A549 (cell line): ENCODE measurements at regions of chr2 and their contacts with region 1.

Region 1: DNA sequence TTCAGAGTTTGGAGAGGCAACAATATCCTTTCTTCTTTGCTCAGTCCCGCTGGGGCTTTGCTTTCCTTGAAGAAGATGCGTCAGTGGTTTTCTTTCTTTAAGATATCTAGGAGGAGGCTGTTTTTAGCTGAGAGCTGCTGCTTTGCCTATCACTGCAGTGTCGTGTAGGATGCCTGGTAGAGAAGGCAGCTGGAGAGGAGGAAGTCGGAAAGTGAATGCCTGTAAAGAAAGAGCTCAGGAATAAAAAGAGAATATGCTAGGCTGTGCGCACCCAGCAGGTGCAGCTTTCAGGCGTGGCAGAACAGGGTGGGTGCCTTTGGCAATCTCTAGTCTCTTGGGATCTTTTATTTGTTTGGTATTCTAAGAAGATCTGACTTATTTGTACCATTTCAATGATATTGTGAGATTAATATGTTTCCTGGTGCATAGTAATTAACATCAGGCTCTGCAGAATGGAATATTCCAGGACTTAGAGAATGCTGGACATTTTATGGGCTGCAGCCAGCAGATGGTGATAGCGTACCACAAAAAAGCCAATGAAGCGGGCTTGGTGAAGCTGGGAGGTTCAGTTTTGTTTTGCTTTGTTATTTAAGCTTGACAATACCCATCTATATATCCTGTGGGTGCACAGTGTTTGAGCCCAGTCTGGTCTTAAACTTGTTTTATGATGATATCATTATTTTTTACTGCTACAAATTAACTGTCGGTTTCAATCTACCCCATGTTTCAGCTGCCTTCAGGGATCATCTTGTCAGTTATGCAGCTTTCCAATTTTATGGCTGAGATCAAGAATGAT is 34.9 kb downstream of the CAVIN2 start:
- DNase-seq: peak; percentile 31 to 65
- ATAC-seq: peak; percentile 95 to 98
- H3K4me3 ChIP-seq: no peak overlapping the region
- H3K27ac ChIP-seq: peak overlapping the region; percentile 48 to 58; a peak in 4 of 6 replicates
- H3K4me1 ChIP-seq: peaks cover 5% of the 10 kb centered on the region; the same call in 1 of the 3 replicates
- CTCF ChIP-seq: peak; percentile 95
- EP300 ChIP-seq: no peak
- POLR2A ChIP-seq: no peak
- RAD21 ChIP-seq: peak; percentile 99

Region 2: DNA sequence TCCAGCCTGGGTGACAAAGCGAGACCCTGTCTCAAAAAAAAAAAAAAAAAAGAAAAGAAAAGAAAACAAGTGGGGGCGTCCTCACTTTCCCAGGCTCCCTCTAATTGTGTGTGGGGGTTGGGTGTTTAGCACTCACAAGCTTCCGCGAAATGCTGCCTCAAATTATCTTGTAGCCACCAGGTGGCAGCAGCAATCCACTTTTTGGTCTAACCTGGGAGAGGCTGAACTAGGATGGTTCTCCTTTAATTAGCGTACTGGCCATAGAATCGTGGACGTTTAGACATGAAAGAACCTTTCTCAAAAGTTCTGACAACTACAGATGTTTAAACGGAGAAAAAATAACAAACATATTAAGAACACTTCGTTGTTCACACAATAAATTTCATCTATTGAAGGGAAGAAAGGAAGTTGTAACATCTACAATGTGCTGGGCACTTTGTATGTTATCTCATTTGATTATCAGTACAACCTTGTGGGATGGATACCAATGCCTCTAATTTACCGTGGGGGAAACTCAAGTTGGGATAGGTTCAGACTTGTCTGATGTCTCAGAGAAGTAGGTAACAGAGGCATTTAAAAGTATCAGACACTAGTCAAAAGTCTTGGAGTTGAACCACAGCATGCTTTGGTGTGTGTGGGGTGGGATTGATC is 256.8 kb before region 1 on chr2:
- CTCF ChIA-PET with region 1: interaction called, 40 read pairs
- POLR2A ChIA-PET with region 1: no interaction called
- DNase-seq: peak; percentile 60 to 76
- ATAC-seq: peak; percentile 95 to 97
- H3K4me3 ChIP-seq: no peak overlapping the region
- H3K27ac ChIP-seq: peak overlapping the region; percentile 7 to 36; a peak in 2 of 6 replicates
- H3K4me1 ChIP-seq: peaks cover 11% of the 10 kb centered on the region; the same call in 1 of the 3 replicates
- CTCF ChIP-seq: peak; percentile 89
- EP300 ChIP-seq: no peak
- POLR2A ChIP-seq: no peak
- RAD21 ChIP-seq: peak; percentile 91 to 95

Region 3: DNA sequence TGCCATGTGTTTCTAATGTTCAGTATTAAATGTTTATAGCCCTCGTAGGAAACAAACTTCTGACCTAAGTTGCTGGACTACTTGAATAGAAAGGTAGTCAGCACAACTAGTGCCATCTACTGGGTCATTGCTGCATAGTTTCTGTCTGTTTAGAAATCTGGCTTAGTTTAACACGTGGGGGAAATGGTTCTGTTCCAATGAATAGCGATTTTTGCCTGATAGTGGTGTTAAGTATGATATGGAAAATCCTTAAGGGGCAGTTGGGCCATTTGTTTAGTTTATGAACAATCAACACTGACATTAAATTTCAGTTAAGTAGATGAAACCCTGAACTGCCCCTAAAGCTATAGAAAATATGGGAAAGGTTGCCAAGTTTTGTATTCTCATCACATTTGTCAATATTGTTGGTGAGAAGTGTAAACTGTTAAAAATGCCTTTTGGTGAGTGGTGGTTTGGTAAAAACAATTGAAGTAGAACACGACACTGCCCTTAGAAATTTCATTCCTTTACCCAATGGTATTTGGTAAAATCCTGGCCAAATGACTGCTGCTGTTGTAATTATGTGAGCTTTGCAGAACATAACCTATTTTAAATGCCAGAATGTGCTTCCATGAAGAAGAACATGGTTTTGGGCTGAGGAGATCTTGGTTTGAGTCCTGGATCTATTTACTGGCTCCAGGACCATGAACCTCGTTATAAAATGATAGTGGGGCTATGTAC is 120.8 kb before region 1 on chr2:
- CTCF ChIA-PET with region 1: no interaction called
- POLR2A ChIA-PET with region 1: no interaction called
- DNase-seq: peak; percentile 68 to 81
- ATAC-seq: peak; percentile 72 to 76
- H3K4me3 ChIP-seq: no peak overlapping the region
- H3K27ac ChIP-seq: peak overlapping the region; percentile 29 to 69; a peak in 2 of 6 replicates
- H3K4me1 ChIP-seq: peaks cover 47% of the 10 kb centered on the region
- CTCF ChIP-seq: peak; percentile 84
- EP300 ChIP-seq: no peak
- POLR2A ChIP-seq: no peak
- RAD21 ChIP-seq: peak; percentile 83 to 84

Region 4: GRCh38 chr2:191748059-191748461 is 63.9 kb before region 1 on chr2:
- CTCF ChIA-PET with region 1: no interaction called
- POLR2A ChIA-PET with region 1: no interaction called
- DNase-seq: no peak
- ATAC-seq: no peak
- H3K4me3 ChIP-seq: no peak overlapping the region
- H3K27ac ChIP-seq: no peak overlapping the region
- H3K4me1 ChIP-seq: 0 out of 3 replicates have a peak, but pooled peaks cover 3% of the 10 kb centered on the region
- CTCF ChIP-seq: no peak
- EP300 ChIP-seq: no peak
- POLR2A ChIP-seq: no peak
- RAD21 ChIP-seq: no peak

Region 5: DNA sequence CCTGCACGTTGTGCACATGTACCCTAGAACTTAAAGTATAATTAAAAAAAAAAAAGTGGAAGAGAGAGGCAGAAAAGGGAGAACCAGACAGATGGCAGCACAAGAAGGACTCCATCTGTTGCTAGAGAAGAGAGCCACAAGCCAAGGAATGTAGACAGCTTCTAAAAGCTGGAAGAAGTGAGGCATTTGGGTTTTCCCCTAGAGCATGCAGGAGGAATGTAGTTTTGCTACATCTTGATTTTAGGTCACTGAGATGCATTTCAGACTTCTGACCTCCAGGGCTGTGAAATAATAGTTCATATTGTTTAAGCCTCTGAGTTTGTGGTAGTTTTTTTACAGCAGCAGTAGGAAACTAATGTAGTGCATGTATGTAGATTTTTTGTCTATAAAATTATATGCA is 11.1 kb before region 1 on chr2:
- CTCF ChIA-PET with region 1: interaction called, 26 read pairs
- POLR2A ChIA-PET with region 1: no interaction called
- DNase-seq: no peak
- ATAC-seq: no peak
- H3K4me3 ChIP-seq: no peak overlapping the region
- H3K27ac ChIP-seq: no peak overlapping the region
- H3K4me1 ChIP-seq: no peaks in the 10 kb centered on the region
- CTCF ChIP-seq: no peak
- EP300 ChIP-seq: no peak
- POLR2A ChIP-seq: no peak
- RAD21 ChIP-seq: no peak

Region 6: DNA sequence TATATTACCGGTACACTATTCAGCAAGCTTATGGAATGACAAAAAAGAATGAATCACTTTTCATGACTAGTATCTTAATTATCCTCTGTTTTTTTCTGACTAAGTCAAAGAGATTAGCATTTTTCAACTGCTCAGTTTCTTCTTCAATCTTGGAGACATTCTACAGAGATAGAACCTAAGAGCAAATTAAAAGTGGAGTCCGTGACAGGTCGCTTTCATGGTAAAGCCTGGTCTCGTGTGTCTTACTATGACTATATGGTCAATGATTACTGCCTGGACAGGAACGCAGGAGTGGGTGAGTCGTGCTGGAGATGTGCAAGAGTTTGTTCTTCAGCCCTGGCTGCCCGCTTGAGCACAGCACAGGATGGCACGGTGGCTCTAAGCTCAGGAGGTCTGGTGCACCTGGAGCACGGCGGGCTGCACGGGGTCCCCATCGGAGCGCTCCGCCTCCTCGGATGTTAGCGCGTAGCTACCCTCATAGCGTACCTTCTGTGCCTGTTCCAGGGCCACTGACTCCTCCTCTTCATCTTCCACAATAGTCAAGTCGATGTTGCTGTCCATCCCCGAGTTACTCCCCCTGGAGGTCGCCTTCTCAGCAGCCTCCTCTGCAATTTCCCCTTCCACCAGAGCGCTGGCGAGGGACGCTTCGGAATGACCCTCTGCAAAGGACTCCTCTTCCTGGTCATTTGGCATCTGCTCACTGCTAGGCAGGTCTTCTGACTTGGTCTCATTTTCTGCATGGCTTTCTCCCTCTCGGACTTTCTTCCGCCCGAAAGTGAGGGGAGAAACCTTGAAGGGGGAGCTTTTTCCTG is 23.7 kb after region 1 on chr2:
- CTCF ChIA-PET with region 1: interaction called, 11 read pairs
- POLR2A ChIA-PET with region 1: no interaction called
- DNase-seq: no peak
- ATAC-seq: peak; percentile 52 to 54; a peak in 3 of 6 replicates
- H3K4me3 ChIP-seq: no peak overlapping the region
- H3K27ac ChIP-seq: no peak overlapping the region
- H3K4me1 ChIP-seq: peaks cover 6% of the 10 kb centered on the region; the same call in 1 of the 3 replicates
- CTCF ChIP-seq: no peak
- EP300 ChIP-seq: no peak
- POLR2A ChIP-seq: no peak
- RAD21 ChIP-seq: no peak

Region 7: DNA sequence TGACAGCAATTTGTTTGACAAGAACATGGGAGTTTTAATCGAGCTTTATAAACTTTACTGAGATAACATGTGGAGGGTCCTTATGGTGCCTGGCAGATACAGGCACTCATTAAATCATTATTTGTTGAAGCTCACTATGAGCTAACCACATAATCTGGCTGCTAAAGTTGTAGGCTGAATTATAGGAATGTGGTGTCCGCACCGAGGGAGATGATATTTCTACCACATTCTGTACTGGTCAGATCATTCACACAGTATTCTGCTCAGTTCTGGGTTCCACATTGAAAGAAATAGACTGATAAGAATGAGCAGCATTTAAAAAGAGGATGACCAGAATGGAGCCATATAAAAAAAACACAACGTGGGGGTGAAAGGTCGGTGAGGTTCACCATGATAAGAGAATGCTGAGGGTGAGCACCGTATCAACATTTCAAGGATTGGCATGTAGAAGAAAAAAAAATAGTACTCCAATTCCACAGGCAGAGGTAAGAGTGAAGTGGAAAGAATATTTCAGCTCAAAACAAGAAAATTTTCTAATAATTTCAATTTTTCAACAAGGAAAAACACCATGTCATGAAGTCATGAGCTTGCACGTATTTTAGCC is 328.3 kb after region 1 on chr2:
- CTCF ChIA-PET with region 1: interaction called, 10 read pairs
- POLR2A ChIA-PET with region 1: no interaction called
- DNase-seq: no peak
- ATAC-seq: no peak
- H3K4me3 ChIP-seq: no peak overlapping the region
- H3K27ac ChIP-seq: no peak overlapping the region
- H3K4me1 ChIP-seq: no peaks in the 10 kb centered on the region
- CTCF ChIP-seq: no peak
- EP300 ChIP-seq: no peak
- POLR2A ChIP-seq: no peak
- RAD21 ChIP-seq: no peak

Region 8: DNA sequence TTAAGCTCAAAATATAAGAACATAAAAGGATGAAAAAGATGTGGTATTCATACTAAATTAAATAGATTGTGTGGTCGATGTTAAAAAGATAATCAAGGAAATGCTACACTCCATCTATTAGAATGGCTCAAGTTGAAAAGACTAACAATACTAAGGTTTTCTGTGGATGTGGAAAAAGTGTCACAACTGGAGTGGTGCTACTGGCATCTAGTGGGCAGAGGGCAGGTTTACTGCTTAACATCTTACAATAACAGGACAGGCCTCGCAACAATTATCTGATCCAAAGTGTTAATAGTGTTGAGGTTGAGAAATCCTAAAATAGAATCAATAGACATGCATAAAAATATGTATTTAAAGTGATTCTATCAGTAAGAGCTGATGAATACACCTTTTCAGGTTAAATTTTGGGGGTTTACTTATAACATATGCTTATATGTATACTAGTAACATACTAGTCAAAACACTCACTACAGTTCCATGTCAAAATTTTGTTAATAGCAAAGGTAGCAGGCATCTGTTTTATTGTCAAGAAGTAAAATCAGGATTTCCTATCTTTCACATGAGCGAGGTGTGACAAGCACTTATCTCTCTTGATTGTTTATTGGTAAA is 474.2 kb after region 1 on chr2:
- CTCF ChIA-PET with region 1: interaction called, 21 read pairs
- POLR2A ChIA-PET with region 1: no interaction called
- DNase-seq: peak in 1 of 2 experiments; percentile 53
- ATAC-seq: peak; percentile 74 to 79; a peak in 5 of 6 replicates
- H3K4me3 ChIP-seq: no peak overlapping the region
- H3K27ac ChIP-seq: no peak overlapping the region
- H3K4me1 ChIP-seq: no peaks in the 10 kb centered on the region
- CTCF ChIP-seq: peak; percentile 52
- EP300 ChIP-seq: no peak
- POLR2A ChIP-seq: no peak
- RAD21 ChIP-seq: peak; percentile 70 to 72